HEK293 (cell line): ENCODE measurements at regions of chr19 and their contacts with region 1.

Region 1: DNA sequence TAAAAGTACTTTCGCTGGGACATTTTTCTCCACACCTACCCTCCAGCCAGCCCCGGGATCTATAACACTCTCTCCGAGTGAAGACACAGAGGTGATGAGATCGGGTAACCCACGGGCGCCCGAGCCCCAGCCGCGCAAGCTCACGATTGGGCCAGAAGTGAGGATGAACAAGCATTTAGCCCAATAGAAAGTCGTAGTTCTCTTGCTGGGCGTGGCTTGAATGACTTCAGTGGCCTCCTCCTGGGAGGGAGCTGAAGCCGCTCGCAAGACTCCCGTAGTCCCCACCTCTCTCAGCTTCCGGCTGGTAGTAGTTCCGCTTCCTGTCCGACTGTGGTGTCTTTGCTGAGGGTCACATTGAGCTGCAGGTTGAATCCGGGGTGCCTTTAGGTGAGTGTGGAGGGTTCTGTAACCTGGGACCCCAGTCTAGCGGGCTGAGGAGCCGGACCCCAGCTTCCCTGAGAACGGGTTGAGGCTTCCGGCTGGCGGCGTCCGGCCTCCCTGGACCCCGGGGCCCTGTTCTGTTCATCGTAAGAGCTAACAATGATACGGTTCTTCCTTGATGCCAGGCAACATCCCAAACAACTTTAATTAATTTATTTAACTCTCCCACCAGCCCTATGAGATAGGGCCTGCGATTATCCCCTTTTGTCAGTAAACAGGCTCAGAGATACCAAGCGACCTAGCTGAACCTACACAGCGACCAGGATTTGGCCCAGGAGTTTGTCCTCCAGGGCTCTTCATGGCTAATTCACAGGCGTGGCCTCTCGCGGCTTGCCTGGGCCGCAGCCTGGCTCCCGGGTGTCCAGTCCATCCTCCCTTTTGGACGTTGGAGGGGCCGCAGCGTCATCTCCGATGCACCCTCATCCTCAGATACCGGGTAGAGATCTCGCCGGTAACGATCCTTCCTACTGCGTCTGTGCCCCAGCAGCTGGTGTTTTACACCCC is at the start of gene COX6B1:
- H3K4me3 ChIP-seq: peak within 1 kb of the TSS; percentile 70
- H3K27ac ChIP-seq: peak within 1 kb of the TSS; percentile 63
- H3K4me1 ChIP-seq: peaks cover 25% of the 10 kb centered on the region
- CTCF ChIP-seq: no peak; the same call in 1 of the 2 replicates

Region 2: GRCh38 chr19:35612559-35613321 is 35.5 kb before region 1 on chr19 and contains the start of gene HAUS5:
- CTCF ChIA-PET with region 1: interaction called, 3 read pairs
- POLR2A ChIA-PET with region 1: interaction called, 32 read pairs
- H3K4me3 ChIP-seq: peak within 1 kb of the TSS; percentile 68
- H3K27ac ChIP-seq: peak within 1 kb of the TSS; percentile 94
- H3K4me1 ChIP-seq: peaks cover 13% of the 10 kb centered on the region
- CTCF ChIP-seq: peak; percentile 88

Region 3: GRCh38 chr19:35628565-35629331 is 19.5 kb before region 1 on chr19 and contains the start of gene RBM42:
- CTCF ChIA-PET with region 1: interaction called, 3 read pairs
- POLR2A ChIA-PET with region 1: interaction called, 42 read pairs
- H3K4me3 ChIP-seq: peak within 1 kb of the TSS; percentile 62
- H3K27ac ChIP-seq: peak within 1 kb of the TSS; percentile 83
- H3K4me1 ChIP-seq: peaks cover 13% of the 10 kb centered on the region
- CTCF ChIP-seq: no peak

Region 4: GRCh38 chr19:35665157-35665556 is 16.9 kb after region 1 on chr19:
- CTCF ChIA-PET with region 1: interaction called, 11 read pairs
- POLR2A ChIA-PET with region 1: interaction called, 65 read pairs
- H3K4me3 ChIP-seq: no peak overlapping the region
- H3K27ac ChIP-seq: no peak overlapping the region
- H3K4me1 ChIP-seq: no peaks in the 10 kb centered on the region
- CTCF ChIP-seq: no peak

Region 5: GRCh38 chr19:35693830-35694599 is 45.7 kb after region 1 on chr19:
- CTCF ChIA-PET with region 1: interaction called, 13 read pairs
- POLR2A ChIA-PET with region 1: interaction called, 6 read pairs
- H3K4me3 ChIP-seq: no peak overlapping the region
- H3K27ac ChIP-seq: no peak overlapping the region
- H3K4me1 ChIP-seq: no peaks in the 10 kb centered on the region
- CTCF ChIP-seq: peak; percentile 100

Region 6: GRCh38 chr19:35740423-35741202 is 92.3 kb after region 1 on chr19:
- CTCF ChIA-PET with region 1: interaction called, 3 read pairs
- POLR2A ChIA-PET with region 1: interaction called, 17 read pairs
- H3K4me3 ChIP-seq: peak overlapping the region; percentile 52
- H3K27ac ChIP-seq: peak overlapping the region; percentile 97
- H3K4me1 ChIP-seq: peaks cover 20% of the 10 kb centered on the region
- CTCF ChIP-seq: peak; percentile 99; the same call in 1 of the 2 replicates